Naive thymus-derived CD8-positive, alpha-beta T cell (primary cell): ENCODE measurements at regions of chr17 and their contacts with region 1.

Region 1: GRCh38 chr17:1628856-1629646 is 417 bp upstream of the SLC43A2 start:
- DNase-seq: peak; percentile 84 to 97 (median 87)
- ATAC-seq: peak; percentile 77 to 84
- H3K4me3 Mint-ChIP-seq: peak overlapping the region; percentile 92 to 99 (median 95)
- H3K27ac Mint-ChIP-seq: peak overlapping the region; percentile 82 to 99 (median 92)
- H3K4me1 Mint-ChIP-seq: peaks cover 15 to 46% (median 25%) of the 10 kb centered on the region in 4 donors
- H3K27me3 Mint-ChIP-seq: no peaks in the 10 kb centered on the region

Region 2: GRCh38 chr17:1399679-1400512 is 229.2 kb before region 1 on chr17 and contains the start of gene YWHAE:
- POLR2A ChIA-PET with region 1: interaction called, 12 read pairs
- DNase-seq: peak; percentile 93 to 96 (median 94)
- ATAC-seq: peak; percentile 87 to 89
- H3K4me3 Mint-ChIP-seq: peak within 1 kb of the TSS; percentile 98 to 100 (median 99)
- H3K27ac Mint-ChIP-seq: peak within 1 kb of the TSS; percentile 95 to 100 (median 99)
- H3K4me1 Mint-ChIP-seq: peaks cover 22 to 44% (median 41%) of the 10 kb centered on the region in 4 donors
- H3K27me3 Mint-ChIP-seq: no peaks in the 10 kb centered on the region
- polyA plus RNA-seq, gene YWHAE: 28.3 to 34.2 (median 34.0) TPM

Region 3: DNA sequence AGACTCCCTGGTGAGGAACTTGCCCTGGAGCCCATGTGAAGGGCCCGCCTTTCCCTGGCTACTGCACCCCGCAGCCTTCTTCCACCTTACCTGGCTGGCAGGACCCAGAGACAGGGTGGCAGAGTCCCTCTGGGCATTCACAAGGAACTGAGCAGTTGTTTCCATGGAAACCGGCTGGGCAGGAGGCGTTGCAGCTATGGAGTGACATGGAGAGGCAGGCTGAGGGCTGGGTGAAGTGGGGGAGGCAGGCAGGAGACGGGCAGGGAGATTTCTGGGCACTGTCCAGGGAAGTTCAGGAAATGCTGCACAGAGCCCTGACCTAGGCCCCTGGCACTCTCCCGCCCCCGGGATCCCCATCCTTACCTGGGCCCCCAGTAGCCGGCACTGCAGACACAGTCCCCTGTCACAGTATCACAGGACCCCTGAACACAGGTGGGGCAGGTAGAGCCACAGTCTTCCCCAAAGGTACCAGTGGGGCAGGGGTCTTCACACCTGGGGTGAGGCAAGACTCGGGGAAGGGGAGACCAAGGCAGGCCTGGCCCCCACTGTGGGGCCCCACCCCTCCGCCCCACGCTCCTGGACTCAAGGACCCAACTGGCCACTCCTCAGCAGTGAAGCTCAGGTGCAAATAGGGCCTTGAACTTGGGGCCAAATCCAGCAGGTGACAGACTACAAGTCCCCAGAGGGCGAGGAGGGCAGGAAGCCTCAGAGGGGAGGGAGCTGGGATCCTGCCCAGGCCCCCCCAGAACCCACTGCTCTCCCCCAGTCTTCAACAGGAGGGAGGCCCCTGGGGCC is 10.7 kb after region 1 on chr17:
- POLR2A ChIA-PET with region 1: interaction called, 13 read pairs
- DNase-seq: peak in 1 of 10 donors; percentile 47
- ATAC-seq: no peak
- H3K4me3 Mint-ChIP-seq: no peak overlapping the region
- H3K27ac Mint-ChIP-seq: peak overlapping the region in 1 of 10 donors; percentile 63
- H3K4me1 Mint-ChIP-seq: peaks cover 5 to 12% (median 8%) of the 10 kb centered on the region in 4 donors
- H3K27me3 Mint-ChIP-seq: no peaks in the 10 kb centered on the region

Region 4: DNA sequence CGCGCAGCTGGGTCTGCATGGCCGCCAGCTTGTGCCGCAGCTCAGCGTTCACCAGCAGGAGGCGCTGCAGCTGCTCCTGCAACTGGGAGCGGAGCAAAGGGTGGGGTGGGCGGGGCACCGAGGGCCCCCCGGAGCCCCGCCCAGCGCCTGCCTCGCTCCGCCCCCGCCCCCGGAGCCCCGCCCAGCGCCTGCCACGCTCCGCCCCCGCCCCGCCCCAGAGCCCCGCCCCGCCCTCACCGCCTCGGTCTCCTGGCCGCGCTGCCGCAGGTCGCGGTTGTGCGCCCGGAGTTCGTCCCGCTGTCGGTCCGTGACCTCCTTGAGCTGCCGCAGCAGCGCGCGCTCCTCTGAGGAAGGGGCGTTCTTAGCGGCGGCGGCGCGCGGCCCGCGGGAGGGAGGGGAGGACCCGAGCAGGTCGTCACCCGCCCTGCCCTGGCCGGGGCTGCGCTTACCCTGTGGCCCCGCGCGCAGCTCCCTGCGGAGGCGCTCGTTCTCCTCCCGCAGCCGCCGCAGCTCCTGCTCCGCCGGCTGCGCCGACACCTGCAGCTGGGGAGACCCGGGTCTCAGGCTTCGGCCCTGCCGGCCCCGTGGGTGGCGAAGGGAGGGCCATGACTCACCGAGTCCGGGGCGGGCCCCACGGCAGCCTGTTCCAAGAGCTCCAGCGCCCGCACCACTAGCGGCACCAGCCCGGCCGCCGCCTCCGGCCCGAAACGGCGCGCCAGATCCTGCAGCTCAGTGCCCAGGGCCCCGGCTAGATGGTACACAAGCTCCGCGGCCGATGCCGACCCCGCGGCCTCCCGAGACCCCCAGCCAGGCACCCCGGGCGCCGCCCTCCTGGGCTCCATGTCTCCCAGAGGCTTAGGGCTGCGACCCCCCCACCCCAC is 20.2 kb after region 1 on chr17:
- POLR2A ChIA-PET with region 1: interaction called, 45 read pairs
- DNase-seq: peak; percentile 89 to 99 (median 94)
- ATAC-seq: peak; percentile 81 to 82
- H3K4me3 Mint-ChIP-seq: peak overlapping the region; percentile 54 to 80 (median 69)
- H3K27ac Mint-ChIP-seq: peak overlapping the region in 2 of 10 donors; percentile 43 to 75
- H3K4me1 Mint-ChIP-seq: peaks cover 2 to 30% (median 20%) of the 10 kb centered on the region in 4 donors
- H3K27me3 Mint-ChIP-seq: no peaks in the 10 kb centered on the region

Region 5: DNA sequence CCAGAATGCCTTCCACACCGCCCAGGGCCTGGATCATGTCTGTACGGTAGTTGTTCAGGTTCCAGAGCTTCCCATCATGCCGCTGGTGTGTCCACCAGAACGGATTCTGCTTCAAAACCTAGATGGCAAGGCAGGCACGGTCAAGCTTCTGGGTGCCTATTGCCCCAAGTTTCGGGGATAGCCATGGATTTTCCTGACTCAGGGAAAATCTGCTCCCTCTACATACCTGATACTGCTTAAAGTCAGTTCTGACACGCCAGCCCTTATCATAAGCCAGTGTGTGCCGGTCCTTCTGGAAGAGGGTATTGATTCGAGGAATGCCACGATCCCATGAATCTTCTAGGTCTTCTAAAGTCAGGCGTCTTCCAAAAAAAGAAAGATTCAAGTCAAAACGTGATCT is 32.0 kb after region 1 on chr17:
- POLR2A ChIA-PET with region 1: no interaction called
- DNase-seq: no peak
- ATAC-seq: no peak
- H3K4me3 Mint-ChIP-seq: no peak overlapping the region
- H3K27ac Mint-ChIP-seq: no peak overlapping the region
- H3K4me1 Mint-ChIP-seq: peaks cover 0 to 14% (median 10%) of the 10 kb centered on the region in 4 donors
- H3K27me3 Mint-ChIP-seq: no peaks in the 10 kb centered on the region

Region 6: GRCh38 chr17:1673041-1673785 is 44.2 kb after region 1 on chr17:
- POLR2A ChIA-PET with region 1: no interaction called
- DNase-seq: no peak
- ATAC-seq: no peak
- H3K4me3 Mint-ChIP-seq: no peak overlapping the region
- H3K27ac Mint-ChIP-seq: peak overlapping the region in 2 of 10 donors; percentile 12 to 30
- H3K4me1 Mint-ChIP-seq: peaks cover 14 to 44% (median 24%) of the 10 kb centered on the region in 4 donors
- H3K27me3 Mint-ChIP-seq: no peaks in the 10 kb centered on the region